BJ (cell line): ENCODE measurements at regions of chr10 and their contacts with region 1.

Region 1: DNA sequence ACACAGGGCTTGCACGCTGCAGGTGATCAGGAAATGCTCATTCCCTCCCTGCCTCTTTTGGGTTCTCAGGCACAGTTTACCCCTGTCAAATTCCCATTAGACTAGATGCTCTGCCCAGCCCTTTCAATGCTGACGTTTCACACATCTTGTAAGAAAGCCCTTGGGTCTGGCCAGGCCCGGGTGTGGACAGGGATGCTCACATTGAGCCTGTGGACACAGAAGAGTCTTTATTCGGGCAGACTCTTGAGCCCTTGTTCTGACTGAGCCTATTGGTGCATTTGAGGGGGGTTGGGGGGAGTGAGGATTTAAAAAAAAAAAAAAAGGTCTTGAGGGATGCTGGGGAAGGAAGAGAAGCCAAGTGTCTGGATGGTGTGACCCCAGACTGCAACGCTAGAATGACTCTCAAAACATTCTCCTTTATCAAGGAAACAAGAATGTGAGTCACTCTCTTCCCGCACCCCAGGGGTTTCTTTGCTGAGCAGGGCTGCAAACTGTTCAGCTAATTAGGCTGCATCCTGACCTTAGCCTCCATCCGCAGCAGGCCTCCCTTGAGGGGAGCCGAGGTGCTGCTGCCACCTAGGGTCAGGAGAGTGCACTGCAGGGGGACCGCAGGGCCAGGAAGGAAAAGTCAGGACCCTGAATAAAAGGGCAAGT is 53.6 kb upstream of the TMEM72 start:
- DNase-seq: no peak
- H3K4me3 ChIP-seq: no peak overlapping the region
- H3K27me3 ChIP-seq: no peaks in the 10 kb centered on the region
- CTCF ChIP-seq: peak; percentile 100

Region 2: GRCh38 chr10:43671656-43672531 is 1185.6 kb before region 1 on chr10:
- CTCF ChIA-PET with region 1: interaction called, 22 read pairs
- POLR2A ChIA-PET with region 1: no interaction called
- DNase-seq: no peak
- H3K4me3 ChIP-seq: no peak overlapping the region
- H3K27me3 ChIP-seq: no peaks in the 10 kb centered on the region
- CTCF ChIP-seq: peak; percentile 68

Region 3: GRCh38 chr10:44386546-44387052 is 470.9 kb before region 1 on chr10:
- CTCF ChIA-PET with region 1: interaction called, 20 read pairs
- POLR2A ChIA-PET with region 1: no interaction called
- DNase-seq: no peak
- H3K4me3 ChIP-seq: no peak overlapping the region
- H3K27me3 ChIP-seq: no peaks in the 10 kb centered on the region
- CTCF ChIP-seq: peak; percentile 77

Region 4: GRCh38 chr10:44393051-44393630 is 464.3 kb before region 1 on chr10:
- CTCF ChIA-PET with region 1: interaction called, 15 read pairs
- POLR2A ChIA-PET with region 1: interaction called, 3 read pairs
- DNase-seq: peak; percentile 83
- H3K4me3 ChIP-seq: no peak overlapping the region
- H3K27me3 ChIP-seq: no peaks in the 10 kb centered on the region; the same call in 1 of the 2 replicates
- CTCF ChIP-seq: no peak

Region 5: GRCh38 chr10:44696496-44696895 is 161.0 kb before region 1 on chr10:
- CTCF ChIA-PET with region 1: interaction called, 11 read pairs
- POLR2A ChIA-PET with region 1: no interaction called
- DNase-seq: peak; percentile 91
- H3K4me3 ChIP-seq: no peak overlapping the region
- H3K27me3 ChIP-seq: no peaks in the 10 kb centered on the region
- CTCF ChIP-seq: no peak

Region 6: DNA sequence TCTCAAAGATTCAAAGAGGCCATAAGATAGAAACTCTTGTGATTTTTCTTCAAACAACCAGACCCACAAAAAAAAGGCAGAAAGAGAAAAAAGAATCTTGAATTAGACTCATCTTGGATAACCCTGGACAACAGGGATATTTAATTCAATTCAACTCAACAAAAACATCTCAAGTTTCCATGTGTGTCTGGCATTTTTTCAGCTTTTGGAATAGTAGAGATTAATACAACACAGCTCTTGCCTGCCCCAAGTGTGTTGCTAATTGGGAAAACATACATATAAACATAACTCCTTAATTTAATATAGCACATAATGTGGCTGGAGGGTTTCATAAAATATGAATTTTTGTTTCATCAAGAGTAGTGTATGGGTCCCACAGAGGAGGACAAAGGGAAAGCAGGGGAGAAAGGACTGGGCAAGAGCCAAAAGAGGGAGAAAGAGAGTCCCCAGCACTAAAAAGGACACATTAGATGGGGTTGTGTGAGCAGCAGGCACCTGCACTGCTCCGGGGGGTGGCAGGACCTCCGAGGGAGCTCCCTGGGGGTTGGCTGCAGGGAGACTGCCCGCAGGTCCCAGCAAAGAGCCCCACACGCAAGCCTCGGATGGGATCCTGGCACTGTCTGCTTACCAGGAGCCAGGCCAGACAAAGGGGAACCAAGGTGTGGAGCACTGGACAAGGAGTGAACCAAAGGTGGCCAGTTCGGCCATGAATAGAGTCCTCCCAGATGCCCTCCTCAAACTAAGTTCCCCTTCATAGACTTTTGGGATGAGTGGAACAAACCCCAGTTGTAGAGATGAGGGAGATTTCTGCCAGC is 11.9 kb before region 1 on chr10:
- CTCF ChIA-PET with region 1: interaction called, 28 read pairs
- POLR2A ChIA-PET with region 1: no interaction called
- DNase-seq: no peak
- H3K4me3 ChIP-seq: no peak overlapping the region
- H3K27me3 ChIP-seq: no peaks in the 10 kb centered on the region
- CTCF ChIP-seq: no peak